ENCODE measurements at regions of chr18 and their contacts with region 1.

Region 1: GRCh38 chr18:22983175-22983574 is 50.0 kb downstream of the RBBP8 start:
- DNase-seq: no peak
- H3K4me3 ChIP-seq: no peak overlapping the region
- H3K27ac ChIP-seq: no peak overlapping the region
- H3K4me1 ChIP-seq: no peaks in the 10 kb centered on the region
- H3K27me3 ChIP-seq: no peaks in the 10 kb centered on the region
- CTCF ChIP-seq: peak; percentile 67

Region 2: DNA sequence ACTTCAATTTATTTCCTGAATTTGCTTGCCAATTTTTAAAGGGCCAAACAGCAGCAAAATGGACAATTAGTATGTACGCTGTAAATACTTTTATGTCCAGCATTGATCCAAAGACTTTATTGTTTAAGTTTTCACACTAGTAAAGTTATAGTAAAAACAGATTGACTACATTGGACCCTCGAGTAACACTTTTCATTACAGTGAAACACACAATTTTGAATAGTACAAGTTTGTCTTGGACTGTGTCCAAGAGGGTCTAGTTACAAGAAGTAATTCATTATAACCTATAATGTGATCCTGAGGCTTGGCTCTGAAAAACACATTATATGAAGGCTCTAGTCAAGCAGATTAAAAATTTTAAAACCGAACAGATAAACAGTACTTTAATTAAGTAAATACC is 61.4 kb before region 1 on chr18:
- intact Hi-C with region 1: loop called (anchors 10 kb)
- DNase-seq: no peak
- H3K4me3 ChIP-seq: no peak overlapping the region
- H3K27ac ChIP-seq: no peak overlapping the region
- H3K4me1 ChIP-seq: no peaks in the 10 kb centered on the region
- H3K27me3 ChIP-seq: no peaks in the 10 kb centered on the region
- CTCF ChIP-seq: no peak

Region 3: DNA sequence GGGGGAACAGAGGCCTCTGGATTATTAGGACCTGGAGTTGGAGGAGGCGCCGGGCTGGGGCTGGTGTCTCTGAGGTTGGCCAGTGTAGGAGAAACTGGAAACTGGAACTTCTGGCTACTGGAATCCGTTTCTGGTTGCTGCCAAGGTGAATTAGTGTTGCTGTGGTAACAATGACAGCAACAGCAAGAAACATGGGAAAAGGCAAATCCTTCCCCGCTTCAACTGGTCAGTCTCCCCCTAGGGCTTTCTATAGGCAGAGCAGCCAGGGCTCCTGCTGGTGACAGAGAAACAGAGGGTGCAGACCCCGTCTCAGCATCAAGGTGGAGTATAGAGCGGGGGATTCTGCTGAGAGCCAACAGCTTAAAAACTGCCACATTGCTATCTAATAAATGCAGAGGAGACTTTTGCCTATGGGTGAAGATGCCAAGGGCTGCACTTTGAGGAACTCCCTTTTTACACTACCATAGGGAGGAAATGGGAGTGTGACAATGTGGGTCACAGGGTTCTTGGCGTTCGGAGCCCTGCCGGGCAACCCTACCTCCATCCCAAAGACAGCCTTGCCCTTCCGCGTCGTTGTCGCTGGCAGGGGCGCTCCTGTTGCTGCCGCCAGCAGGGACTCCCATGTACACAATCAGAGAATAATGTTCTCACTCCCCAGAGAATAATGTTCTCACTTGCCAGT is 70.7 kb after region 1 on chr18:
- intact Hi-C with region 1: no loop called
- DNase-seq: no peak
- H3K4me3 ChIP-seq: no peak overlapping the region
- H3K27ac ChIP-seq: no peak overlapping the region
- H3K4me1 ChIP-seq: no peaks in the 10 kb centered on the region
- H3K27me3 ChIP-seq: peaks cover 95% of the 10 kb centered on the region
- CTCF ChIP-seq: no peak

Measured in left ventricle myocardium inferior (tissue), 1 donor.